BJ (cell line): ENCODE measurements at regions of chr2 and their contacts with region 1.

Region 1: DNA sequence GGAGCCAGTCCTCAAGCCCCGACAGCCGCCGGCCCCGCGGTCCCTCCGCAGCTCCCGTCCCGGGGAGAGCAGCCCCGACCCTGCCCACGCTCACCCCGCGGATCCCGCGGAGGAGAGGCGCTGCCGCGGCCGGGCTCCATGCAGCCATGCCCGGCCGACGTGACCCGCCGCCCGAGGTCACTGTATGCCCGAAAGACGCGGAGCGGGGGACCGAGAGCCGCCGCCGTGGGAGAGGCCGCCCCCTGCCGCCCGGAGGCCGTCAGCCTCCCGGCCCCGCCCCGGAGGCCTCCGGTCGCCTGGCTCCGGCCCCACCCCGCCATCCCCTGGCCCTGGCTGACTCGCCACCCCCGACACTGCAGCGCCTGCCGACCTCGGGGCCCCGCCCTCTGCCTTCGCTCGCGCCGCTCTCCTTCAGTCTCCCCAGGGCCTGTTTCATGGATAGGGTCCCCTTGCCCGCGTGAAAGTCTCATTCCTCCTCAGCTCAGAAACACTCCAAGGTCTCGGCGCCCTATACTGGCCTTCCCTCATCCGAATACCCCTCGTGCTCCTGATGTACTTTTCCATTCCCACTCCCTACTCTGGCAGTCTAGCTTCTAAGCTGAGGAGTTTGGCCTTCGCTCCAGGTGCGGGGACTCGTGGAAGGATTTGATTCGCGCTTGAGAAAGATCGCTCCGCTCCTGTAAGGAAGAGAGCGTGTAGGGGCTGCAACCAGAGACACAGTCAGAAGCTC is at the start of gene BOLA3:
- DNase-seq: no peak
- H3K4me3 ChIP-seq: peak within 1 kb of the TSS; percentile 53
- H3K27me3 ChIP-seq: no peaks in the 10 kb centered on the region
- CTCF ChIP-seq: peak; percentile 23
- polyA plus RNA-seq, gene BOLA3: 11.4 and 35.9 TPM in 2 replicates

Region 2: GRCh38 chr2:73896362-73897239 is 251.3 kb before region 1 on chr2:
- CTCF ChIA-PET with region 1: no interaction called
- POLR2A ChIA-PET with region 1: no interaction called
- DNase-seq: peak; percentile 89
- H3K4me3 ChIP-seq: no peak overlapping the region
- H3K27me3 ChIP-seq: peaks cover 20% of the 10 kb centered on the region
- CTCF ChIP-seq: no peak

Region 3: DNA sequence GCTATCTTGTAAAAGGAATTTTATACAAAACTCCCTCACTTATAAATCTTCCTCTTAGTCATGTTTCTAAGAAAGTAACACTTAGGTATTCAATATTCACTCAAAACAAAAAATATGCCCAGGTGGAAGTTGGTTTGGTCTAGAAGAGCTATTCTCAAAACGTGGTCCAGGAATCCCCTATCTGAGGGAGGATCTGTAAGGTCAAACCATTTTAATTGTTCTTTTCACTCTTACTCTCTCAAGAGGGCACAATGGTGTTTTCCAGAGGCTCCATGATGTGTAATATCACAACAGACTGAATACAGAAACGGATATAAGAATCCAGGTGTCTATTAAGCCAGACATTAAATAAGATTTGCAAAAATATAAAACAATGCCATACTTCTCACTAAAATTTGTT is 20.8 kb after region 1 on chr2:
- CTCF ChIA-PET with region 1: interaction called, 10 read pairs
- POLR2A ChIA-PET with region 1: no interaction called
- DNase-seq: no peak
- H3K4me3 ChIP-seq: no peak overlapping the region
- H3K27me3 ChIP-seq: no peaks in the 10 kb centered on the region
- CTCF ChIP-seq: no peak